ENCODE measurements at regions of chr22 and their contacts with region 1.

Region 1: GRCh38 chr22:39946503-39947219 is 13.5 kb upstream of the TMA7B start:
- DNase-seq: no peak
- ATAC-seq: peak; percentile 54
- H3K4me3 ChIP-seq: no peak overlapping the region
- H3K27ac ChIP-seq: no peak overlapping the region
- H3K4me1 ChIP-seq: peaks cover 46% of the 10 kb centered on the region
- H3K27me3 ChIP-seq: no peaks in the 10 kb centered on the region
- CTCF ChIP-seq: no peak
- EP300 ChIP-seq: no peak
- POLR2A ChIP-seq: no peak
- RAD21 ChIP-seq: no peak

Region 2: GRCh38 chr22:39543095-39543494 is 403.6 kb before region 1 on chr22:
- CTCF ChIA-PET with region 1: no interaction called
- POLR2A ChIA-PET with region 1: no interaction called
- RAD21 ChIA-PET with region 1: no interaction called
- SMC1A ChIA-PET with region 1: no interaction called
- in situ Hi-C with region 1: loop called (anchors 5 kb)
- intact Hi-C with region 1: no loop called
- DNase-seq: no peak
- ATAC-seq: peak; percentile 81
- H3K4me3 ChIP-seq: no peak overlapping the region
- H3K27ac ChIP-seq: no peak overlapping the region
- H3K4me1 ChIP-seq: no peaks in the 10 kb centered on the region
- H3K27me3 ChIP-seq: peaks cover 0 to 3% of the 10 kb centered on the region in 2 experiments; a peak in 1 of 4 replicates
- CTCF ChIP-seq: peak; percentile 50 to 60 (median 51); a peak in 4 of 6 replicates
- EP300 ChIP-seq: no peak
- POLR2A ChIP-seq: no peak
- RAD21 ChIP-seq: peak; percentile 49

Region 3: DNA sequence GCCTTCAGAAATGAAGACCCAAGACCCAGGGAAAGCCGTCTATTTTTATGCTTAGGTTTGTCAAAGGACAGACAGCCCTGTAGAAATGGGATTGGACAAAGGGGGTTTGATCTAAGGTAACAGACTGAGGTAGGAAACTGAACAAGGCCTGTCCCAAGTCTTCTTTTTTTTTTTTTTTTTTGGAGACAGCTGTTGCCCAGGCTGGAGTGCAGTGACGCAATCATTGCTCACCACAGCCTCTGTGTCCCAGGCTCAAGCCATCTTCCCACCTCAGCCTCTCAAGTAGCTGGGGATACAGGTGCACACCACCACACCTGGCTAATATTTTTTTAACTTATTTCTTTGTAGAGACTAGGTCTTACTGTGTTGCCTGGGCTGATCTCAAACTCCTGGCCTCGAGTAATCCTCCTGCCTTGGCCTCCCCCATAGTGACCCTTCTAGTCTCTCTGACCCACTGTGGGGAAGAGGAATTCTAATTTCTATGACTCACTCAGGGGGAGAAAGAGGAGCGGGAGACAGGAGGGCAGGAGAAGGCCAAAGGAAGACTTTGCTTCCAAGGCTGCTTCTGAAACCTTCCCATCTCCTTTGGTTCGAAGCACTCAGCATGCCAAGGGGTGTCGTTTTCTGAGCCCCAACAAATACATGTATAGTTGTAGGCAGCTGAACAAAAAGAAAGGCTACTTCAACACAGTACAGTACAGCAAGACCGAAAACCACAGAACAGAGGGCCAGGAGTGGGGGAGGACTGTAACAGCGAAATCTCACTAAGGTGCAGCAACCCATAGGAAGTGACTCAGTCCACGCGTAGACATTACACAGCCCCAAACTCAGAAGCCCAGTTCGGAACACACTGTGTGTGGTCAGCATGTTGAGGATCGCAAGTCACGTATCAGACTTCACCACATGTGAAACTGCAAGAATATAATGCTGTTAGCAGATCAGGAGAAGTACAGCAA is 14.4 kb after region 1 on chr22:
- CTCF ChIA-PET with region 1: interaction called, 3 read pairs
- POLR2A ChIA-PET with region 1: interaction called, 3 read pairs
- RAD21 ChIA-PET with region 1: interaction called, 13 read pairs
- SMC1A ChIA-PET with region 1: interaction called, 6 read pairs
- in situ Hi-C with region 1: no loop called
- intact Hi-C with region 1: no loop called
- DNase-seq: peak; percentile 96
- ATAC-seq: peak; percentile 94
- H3K4me3 ChIP-seq: peak overlapping the region; percentile 33; the same call in 1 of the 2 replicates
- H3K27ac ChIP-seq: peak overlapping the region; percentile 17
- H3K4me1 ChIP-seq: peaks cover 49% of the 10 kb centered on the region
- H3K27me3 ChIP-seq: no peaks in the 10 kb centered on the region
- CTCF ChIP-seq: no peak
- EP300 ChIP-seq: peak; percentile 65 to 86; a peak in 2 of 4 replicates
- POLR2A ChIP-seq: peak; percentile 37; the same call in 1 of the 2 replicates
- RAD21 ChIP-seq: no peak

Region 4: GRCh38 chr22:40070701-40071100 is 124.0 kb after region 1 on chr22:
- CTCF ChIA-PET with region 1: no interaction called
- POLR2A ChIA-PET with region 1: no interaction called
- RAD21 ChIA-PET with region 1: no interaction called
- SMC1A ChIA-PET with region 1: no interaction called
- in situ Hi-C with region 1: no loop called
- intact Hi-C with region 1: no loop called
- DNase-seq: no peak
- ATAC-seq: 0 out of 3 replicates have a peak, but pooled peaks have one; percentile 37
- H3K4me3 ChIP-seq: no peak overlapping the region
- H3K27ac ChIP-seq: no peak overlapping the region
- H3K4me1 ChIP-seq: peaks cover 9% of the 10 kb centered on the region; the same call in 1 of the 2 replicates
- H3K27me3 ChIP-seq: no peaks in the 10 kb centered on the region
- CTCF ChIP-seq: no peak
- EP300 ChIP-seq: no peak
- POLR2A ChIP-seq: no peak
- RAD21 ChIP-seq: no peak